Activated B cell treated with CpG ODN at 0.5 μM for 24 hours (primary cell): ENCODE measurements at regions of chrX and their contacts with region 1.

Region 1: DNA sequence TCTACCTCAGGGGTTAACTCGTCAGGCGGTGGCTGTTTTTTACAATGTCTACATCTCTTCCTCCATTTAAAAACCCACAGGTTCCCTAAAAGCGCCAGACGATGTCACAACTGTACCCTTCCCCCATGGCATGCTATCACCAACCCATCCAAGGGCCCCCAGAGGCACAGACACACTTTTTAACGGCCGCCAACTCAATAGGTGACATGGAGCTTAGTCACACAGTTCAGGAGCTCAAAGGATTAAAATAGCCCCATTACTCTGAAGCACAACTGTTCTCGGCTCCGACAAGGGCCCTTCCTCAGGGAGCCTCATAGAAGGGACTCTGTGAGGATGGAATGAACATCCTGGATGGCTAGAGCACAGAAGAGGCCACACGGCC is 12.4 kb downstream of the SH3KBP1 start:
- DNase-seq: no peak
- ATAC-seq: peak; percentile 79
- H3K4me3 Mint-ChIP-seq: peak overlapping the region; percentile 69
- H3K27ac Mint-ChIP-seq: peak overlapping the region; percentile 84
- H3K4me1 Mint-ChIP-seq: peaks cover 86% of the 10 kb centered on the region
- H3K27me3 Mint-ChIP-seq: no peaks in the 10 kb centered on the region
- CTCF ChIP-seq: no peak

Region 2: GRCh38 chrX:19855700-19856381 is 19.2 kb before region 1 on chrX:
- CTCF ChIA-PET with region 1: no interaction called
- POLR2A ChIA-PET with region 1: interaction called, 4 read pairs
- intact Hi-C with region 1: loop called (anchors 2 kb)
- DNase-seq: no peak
- ATAC-seq: no peak
- H3K4me3 Mint-ChIP-seq: peak overlapping the region; percentile 58
- H3K27ac Mint-ChIP-seq: peak overlapping the region; percentile 92
- H3K4me1 Mint-ChIP-seq: peaks cover 65% of the 10 kb centered on the region
- H3K27me3 Mint-ChIP-seq: no peaks in the 10 kb centered on the region
- CTCF ChIP-seq: no peak